PC-9 (cell line): ENCODE measurements at regions of chr1 and their contacts with region 1.

Region 1: DNA sequence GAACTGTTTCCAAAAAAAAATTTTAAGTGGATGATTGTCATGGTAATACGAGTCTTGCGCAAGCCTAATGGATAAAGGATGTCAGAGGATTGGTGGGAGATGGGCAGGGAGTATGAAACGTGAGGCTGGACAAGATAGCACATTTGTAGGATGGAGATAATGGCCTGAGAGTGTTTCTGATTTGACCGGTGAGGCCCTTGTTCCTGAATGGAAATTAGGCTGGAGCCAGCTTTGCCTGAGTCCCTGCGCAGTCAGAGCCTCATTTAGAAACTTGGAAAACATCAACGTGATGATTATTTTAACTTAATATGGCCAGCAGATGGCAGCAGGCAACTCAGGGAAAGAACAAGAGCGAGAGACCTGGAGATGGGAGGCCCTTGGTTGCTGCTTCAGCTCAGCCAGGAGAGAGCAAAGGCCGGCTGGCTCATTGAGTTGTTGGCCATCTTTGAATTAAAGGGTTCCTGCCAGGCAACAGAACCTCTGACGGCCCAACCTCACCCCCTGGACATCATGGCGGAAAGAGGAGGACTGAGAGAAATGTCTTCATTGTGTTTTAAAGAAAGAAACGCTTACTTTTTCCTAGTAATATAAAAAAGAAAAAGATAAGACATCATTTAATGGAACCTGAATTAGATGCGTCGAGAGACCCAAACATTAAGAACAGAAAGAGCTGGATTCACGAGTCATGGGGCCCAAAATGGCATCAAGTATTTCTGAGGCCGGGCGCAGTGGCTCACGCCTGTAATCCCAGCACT is 80.3 kb downstream of the SELENOF start:
- DNase-seq: peak; percentile 45 to 71
- H3K4me3 ChIP-seq: no peak overlapping the region
- H3K27ac ChIP-seq: no peak overlapping the region
- H3K4me1 ChIP-seq: no peaks in the 10 kb centered on the region
- H3K27me3 ChIP-seq: no peaks in the 10 kb centered on the region
- CTCF ChIP-seq: peak; percentile 83

Region 2: GRCh38 chr1:86753700-86754099 is 79.9 kb before region 1 on chr1:
- CTCF ChIA-PET with region 1: no interaction called
- POLR2A ChIA-PET with region 1: no interaction called
- intact Hi-C with region 1: loop called (anchors 5 kb)
- DNase-seq: peak; percentile 27 to 75
- H3K4me3 ChIP-seq: no peak overlapping the region
- H3K27ac ChIP-seq: no peak overlapping the region
- H3K4me1 ChIP-seq: peaks cover 13% of the 10 kb centered on the region
- H3K27me3 ChIP-seq: no peaks in the 10 kb centered on the region
- CTCF ChIP-seq: peak; percentile 45

Region 3: DNA sequence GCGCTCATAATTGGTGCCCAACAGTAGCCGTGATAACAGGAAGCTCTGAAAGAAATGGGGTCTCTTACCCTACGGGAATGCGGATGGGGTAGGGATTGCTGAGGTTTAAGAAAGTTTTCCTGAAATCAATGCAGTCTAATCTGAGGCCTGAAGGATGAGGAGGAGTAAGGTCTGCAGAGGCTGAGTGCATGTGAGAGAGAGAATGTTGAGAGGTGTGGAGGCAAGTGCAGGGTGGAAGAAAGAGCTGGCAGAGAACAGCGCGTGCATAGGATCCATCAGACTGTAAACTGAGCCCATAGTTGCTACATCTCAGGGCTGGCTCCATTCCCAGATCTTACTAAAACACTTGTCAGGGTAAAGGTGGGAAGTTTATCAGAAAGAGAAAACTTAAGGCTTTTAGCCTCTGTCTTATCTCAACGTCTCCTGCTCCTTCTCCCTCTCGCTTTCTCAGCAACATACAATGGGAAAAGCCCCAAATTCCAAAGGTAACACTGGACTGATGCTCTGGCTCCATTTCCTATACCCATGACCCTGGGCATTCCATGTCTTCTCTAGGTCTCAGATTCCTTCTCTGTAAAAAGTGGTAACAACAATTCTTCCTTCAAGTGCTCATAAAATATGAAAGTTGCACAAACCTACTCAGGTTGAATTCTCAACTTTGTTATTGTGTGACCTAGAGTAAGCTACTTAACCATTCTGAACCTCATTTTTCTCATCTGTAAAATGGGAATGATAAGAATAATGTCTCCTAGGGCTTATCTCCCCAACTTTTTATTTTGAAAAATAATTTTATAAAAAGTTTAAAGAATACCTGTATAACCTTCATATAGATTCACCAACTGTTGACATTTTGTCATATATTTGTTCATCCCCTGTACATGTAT is 54.1 kb before region 1 on chr1:
- CTCF ChIA-PET with region 1: no interaction called
- POLR2A ChIA-PET with region 1: no interaction called
- intact Hi-C with region 1: loop called (anchors 5 kb)
- DNase-seq: peak; percentile 38 to 60
- H3K4me3 ChIP-seq: no peak overlapping the region
- H3K27ac ChIP-seq: no peak overlapping the region
- H3K4me1 ChIP-seq: peaks cover 46% of the 10 kb centered on the region
- H3K27me3 ChIP-seq: no peaks in the 10 kb centered on the region
- CTCF ChIP-seq: no peak

Region 4: DNA sequence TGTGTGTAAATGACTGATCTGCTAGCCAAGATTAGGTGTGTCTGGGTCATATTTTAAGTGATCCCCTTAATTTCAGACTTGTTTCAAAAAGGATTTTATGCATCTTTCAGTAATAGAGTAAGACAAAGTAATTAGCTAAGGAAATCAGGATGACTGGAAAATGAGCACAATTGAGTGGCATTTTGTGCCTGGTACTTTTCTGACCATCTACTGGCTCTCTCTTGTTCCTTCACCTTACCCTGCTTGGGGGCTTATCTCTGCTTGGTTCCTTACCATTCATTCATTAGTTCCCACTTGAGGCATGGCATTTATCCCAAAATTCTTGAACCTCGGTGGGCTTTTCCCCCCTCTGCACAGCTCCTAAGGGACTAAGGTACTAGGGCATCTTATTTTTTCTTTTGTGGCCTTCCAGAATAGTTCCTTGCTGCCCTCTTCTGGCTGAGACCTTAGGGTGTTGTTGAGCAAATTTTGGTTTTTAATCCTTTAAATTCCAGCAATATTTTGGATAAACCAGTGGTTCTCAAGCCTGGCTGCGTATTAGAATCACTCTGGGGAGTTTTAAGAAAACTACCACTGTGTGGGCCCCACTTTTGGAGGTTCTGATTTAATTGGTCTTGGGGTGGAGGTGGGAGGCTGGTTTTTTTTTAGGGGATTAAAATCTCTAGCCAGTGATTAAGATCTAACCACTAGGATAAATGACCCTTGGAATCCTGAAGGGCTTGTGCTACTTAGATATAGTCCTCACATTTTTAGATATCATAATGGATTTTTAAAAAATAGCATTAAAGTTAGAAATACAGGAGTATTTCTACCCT is 131.6 kb after region 1 on chr1:
- CTCF ChIA-PET with region 1: no interaction called
- POLR2A ChIA-PET with region 1: no interaction called
- intact Hi-C with region 1: loop called (anchors 2 kb)
- DNase-seq: peak in 1 of 2 experiments; percentile 6
- H3K4me3 ChIP-seq: no peak overlapping the region
- H3K27ac ChIP-seq: no peak overlapping the region
- H3K4me1 ChIP-seq: no peaks in the 10 kb centered on the region
- H3K27me3 ChIP-seq: no peaks in the 10 kb centered on the region
- CTCF ChIP-seq: peak; percentile 87

Region 5: DNA sequence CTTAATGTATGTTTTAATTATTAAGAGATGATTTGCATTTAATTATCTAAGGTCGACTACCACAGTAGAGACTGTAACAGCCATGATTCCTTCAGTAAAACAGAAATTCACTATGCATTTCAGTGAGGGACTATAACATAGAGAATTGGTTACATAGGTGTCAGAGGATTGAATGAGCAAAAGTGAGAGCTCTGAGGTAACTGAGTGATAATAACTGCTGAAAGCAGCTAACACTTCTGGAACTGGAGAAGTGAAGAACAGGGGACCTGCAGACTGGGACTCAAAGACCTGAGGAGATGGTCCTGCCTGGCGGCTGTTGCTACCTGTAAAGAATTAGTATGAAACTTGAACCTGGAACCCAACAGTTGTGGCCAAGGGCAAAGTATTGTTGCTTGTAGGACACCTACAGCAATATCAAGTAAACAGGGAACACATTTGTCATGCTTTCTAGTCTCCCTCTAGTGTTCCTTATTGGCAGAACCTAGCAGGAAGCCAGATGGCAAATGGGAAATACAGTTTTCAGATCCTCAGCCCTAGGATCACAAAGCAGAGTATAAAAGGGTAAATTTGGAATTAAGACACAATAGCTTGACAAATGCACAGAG is 191.4 kb after region 1 on chr1:
- CTCF ChIA-PET with region 1: no interaction called
- POLR2A ChIA-PET with region 1: no interaction called
- intact Hi-C with region 1: loop called (anchors 5 kb)
- DNase-seq: no peak
- H3K4me3 ChIP-seq: no peak overlapping the region
- H3K27ac ChIP-seq: no peak overlapping the region
- H3K4me1 ChIP-seq: no peaks in the 10 kb centered on the region
- H3K27me3 ChIP-seq: no peaks in the 10 kb centered on the region
- CTCF ChIP-seq: peak; percentile 70

Region 6: GRCh38 chr1:87084244-87084836 is 250.7 kb after region 1 on chr1:
- CTCF ChIA-PET with region 1: interaction called, 3 read pairs
- POLR2A ChIA-PET with region 1: no interaction called
- intact Hi-C with region 1: loop called (anchors 1 kb)
- DNase-seq: peak in 1 of 2 experiments; percentile 59
- H3K4me3 ChIP-seq: no peak overlapping the region
- H3K27ac ChIP-seq: no peak overlapping the region
- H3K4me1 ChIP-seq: no peaks in the 10 kb centered on the region
- H3K27me3 ChIP-seq: no peaks in the 10 kb centered on the region
- CTCF ChIP-seq: peak; percentile 79